T-cell (primary cell): ENCODE measurements at regions of chr12 and their contacts with region 1.

Region 1: DNA sequence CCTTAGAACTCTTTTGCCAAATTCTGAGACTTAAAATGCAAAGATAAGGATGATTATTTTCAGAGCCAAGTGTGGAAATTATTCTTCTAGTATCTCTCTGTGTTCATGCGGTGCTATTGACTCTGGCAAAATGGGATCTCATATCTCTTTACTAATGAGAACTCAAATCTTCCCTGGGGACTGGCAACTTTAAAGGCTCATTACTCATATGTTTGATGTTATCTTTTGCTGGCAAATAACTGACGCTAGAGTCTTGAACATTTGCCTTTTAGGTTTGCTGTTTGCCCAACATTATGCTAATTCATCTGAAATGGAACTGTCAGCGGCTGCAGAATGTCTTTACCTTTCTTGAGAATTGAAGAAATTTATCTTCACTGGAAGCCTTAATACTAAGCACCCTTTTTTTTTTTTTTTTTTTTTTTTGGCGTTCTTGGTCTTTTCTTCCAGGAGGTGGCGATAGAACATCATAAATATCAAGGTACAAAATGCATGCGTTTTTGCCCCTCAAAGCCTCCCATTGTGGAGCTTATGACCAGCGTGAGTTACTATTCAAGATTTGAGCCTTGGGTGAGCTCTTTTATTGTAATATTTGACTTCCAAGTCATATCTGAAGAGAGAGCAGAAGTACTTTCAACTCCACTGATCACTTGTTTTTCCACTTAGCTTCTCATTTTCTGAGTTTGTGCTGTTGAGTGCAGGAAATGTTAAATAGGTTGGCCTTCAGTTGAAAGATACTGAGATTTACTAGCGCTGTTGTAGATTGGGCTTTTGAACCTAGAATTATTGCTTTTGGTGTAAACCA is 86.6 kb downstream of the CAND1 start:
- DNase-seq: peak in 14 of 35 experiments; percentile 0 to 77 (median 8)
- ATAC-seq: peak; percentile 55 to 73 (median 64)
- H3K4me3 ChIP-seq: no peak overlapping the region
- H3K4me3 Mint-ChIP-seq: no peak overlapping the region
- H3K27ac ChIP-seq: no peak overlapping the region
- H3K27ac Mint-ChIP-seq: no peak overlapping the region
- H3K4me1 ChIP-seq: peaks cover 0 to 12% of the 10 kb centered on the region in 2 experiments
- H3K4me1 Mint-ChIP-seq: peaks cover 14 to 24% (median 21%) of the 10 kb centered on the region in 3 donors
- H3K27me3 ChIP-seq: no peaks in the 10 kb centered on the region
- H3K27me3 Mint-ChIP-seq: no peaks in the 10 kb centered on the region

Region 2: DNA sequence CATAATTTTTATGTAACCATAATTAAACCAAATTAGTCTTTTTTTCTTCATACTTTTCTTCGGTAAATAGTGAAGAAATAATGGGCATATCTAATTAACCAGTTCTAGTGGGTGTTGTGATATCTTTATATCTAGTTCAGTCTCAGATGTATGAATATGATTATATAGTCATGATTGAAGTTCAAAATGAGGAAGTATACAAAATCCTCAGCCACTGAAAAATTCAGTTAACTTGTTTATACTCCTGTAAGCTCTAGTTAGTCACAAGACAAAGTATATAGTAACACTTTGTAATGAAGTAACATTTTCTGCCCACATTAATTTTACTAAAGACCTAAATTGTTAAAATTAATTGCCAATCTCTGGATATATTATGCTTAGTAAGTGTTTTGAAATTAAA is 40.1 kb before region 1 on chr12:
- CTCF ChIA-PET with region 1: interaction called, 3 read pairs
- POLR2A ChIA-PET with region 1: interaction called in 1 of 2 experiments, 10 read pairs
- DNase-seq: no peak
- ATAC-seq: no peak
- H3K4me3 ChIP-seq: no peak overlapping the region
- H3K4me3 Mint-ChIP-seq: no peak overlapping the region
- H3K27ac ChIP-seq: no peak overlapping the region
- H3K27ac Mint-ChIP-seq: no peak overlapping the region
- H3K4me1 ChIP-seq: no peaks in the 10 kb centered on the region
- H3K4me1 Mint-ChIP-seq: peaks cover 3 to 10% (median 5%) of the 10 kb centered on the region in 3 donors
- H3K27me3 ChIP-seq: no peaks in the 10 kb centered on the region
- H3K27me3 Mint-ChIP-seq: no peaks in the 10 kb centered on the region

Region 3: GRCh38 chr12:67434671-67435370 is 79.0 kb after region 1 on chr12:
- CTCF ChIA-PET with region 1: interaction called, 4 to 10 read pairs
- POLR2A ChIA-PET with region 1: no interaction called
- DNase-seq: no peak
- ATAC-seq: no peak
- H3K4me3 ChIP-seq: no peak overlapping the region
- H3K4me3 Mint-ChIP-seq: no peak overlapping the region
- H3K27ac ChIP-seq: no peak overlapping the region
- H3K27ac Mint-ChIP-seq: no peak overlapping the region
- H3K4me1 ChIP-seq: no peaks in the 10 kb centered on the region
- H3K4me1 Mint-ChIP-seq: peaks cover 8 to 12% (median 11%) of the 10 kb centered on the region in 3 donors
- H3K27me3 ChIP-seq: no peaks in the 10 kb centered on the region
- H3K27me3 Mint-ChIP-seq: peaks cover 1 to 4% of the 10 kb centered on the region in 2 donors

Region 4: DNA sequence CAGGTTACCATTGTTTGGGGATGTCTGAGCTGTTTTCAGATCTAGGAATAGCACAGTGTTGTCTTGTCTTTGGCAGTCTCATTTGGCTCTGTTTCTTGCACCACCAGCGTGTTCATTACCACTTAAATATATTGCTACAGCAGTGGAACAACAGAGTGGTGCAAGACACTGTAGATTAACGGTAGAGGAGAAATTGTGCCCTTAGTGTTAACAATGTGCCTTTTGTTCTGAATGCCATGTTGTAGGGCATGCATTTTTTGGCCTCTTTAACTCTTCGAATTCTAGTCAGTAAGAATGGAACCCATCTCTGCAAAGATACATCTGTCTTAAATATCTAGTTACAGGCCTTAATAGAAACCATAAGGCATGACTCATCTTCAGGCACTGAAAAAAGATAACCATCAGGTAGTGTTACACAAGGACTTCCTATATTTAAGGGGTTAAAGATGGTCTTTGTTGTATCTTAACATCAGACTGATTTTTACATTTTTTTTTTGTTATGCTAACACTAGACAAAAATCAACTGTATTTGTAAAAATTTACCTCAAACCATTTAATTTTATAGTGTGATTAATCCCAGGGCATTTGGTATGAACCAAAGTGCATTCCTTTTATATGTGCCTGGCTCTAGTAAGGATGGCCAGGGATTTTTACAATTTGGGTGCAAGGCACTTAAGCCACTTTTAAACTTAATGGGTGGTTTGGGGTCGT is 305.7 kb after region 1 on chr12:
- CTCF ChIA-PET with region 1: interaction called, 8 to 13 read pairs
- POLR2A ChIA-PET with region 1: no interaction called
- DNase-seq: no peak
- ATAC-seq: peak in 2 of 4 experiments; percentile 34 to 36
- H3K4me3 ChIP-seq: no peak overlapping the region
- H3K4me3 Mint-ChIP-seq: peak overlapping the region in 2 of 3 donors; percentile 22 to 43
- H3K27ac ChIP-seq: no peak overlapping the region
- H3K27ac Mint-ChIP-seq: peak overlapping the region; percentile 34 to 60
- H3K4me1 ChIP-seq: peaks cover 16 to 26% of the 10 kb centered on the region in 2 experiments
- H3K4me1 Mint-ChIP-seq: peaks cover 91 to 95% (median 92%) of the 10 kb centered on the region in 3 donors
- H3K27me3 ChIP-seq: no peaks in the 10 kb centered on the region
- H3K27me3 Mint-ChIP-seq: no peaks in the 10 kb centered on the region

Region 5: DNA sequence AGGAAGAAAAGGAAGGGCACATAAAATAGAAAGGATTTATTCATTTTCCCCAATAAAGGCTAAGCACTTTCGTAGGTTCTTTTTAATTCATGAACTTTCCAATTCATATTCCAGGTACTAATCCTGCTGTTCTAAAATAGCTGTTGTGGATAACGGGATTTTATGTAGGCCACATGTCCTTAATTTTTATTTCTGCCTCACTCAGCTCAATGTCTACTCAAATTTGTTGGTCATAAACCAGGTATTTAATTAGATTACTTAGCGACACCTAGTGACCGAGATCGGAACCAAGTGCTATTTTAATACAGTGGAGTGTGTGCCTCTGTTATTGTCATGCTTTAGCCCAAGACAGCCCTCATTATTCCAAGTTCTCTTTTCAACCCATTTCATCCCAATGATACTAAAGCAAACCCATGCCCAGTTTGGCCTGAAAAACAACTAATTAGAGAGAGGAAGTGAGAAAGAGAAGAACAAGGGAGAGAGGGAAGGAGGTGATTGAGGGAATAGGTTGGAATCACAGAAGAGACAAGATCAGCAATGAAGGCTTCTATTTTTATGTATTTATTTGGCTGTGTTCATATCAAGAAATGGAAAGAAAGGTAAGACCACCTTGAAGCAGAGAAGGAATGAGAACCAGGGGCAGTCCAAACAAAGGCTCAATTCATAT is 587.6 kb after region 1 on chr12:
- CTCF ChIA-PET with region 1: interaction called, 71 to 257 read pairs
- POLR2A ChIA-PET with region 1: interaction called in 1 of 2 experiments, 5 read pairs
- DNase-seq: peak in 33 of 35 experiments; percentile 15 to 83 (median 50)
- ATAC-seq: peak; percentile 69 to 87 (median 77)
- H3K4me3 ChIP-seq: no peak overlapping the region
- H3K4me3 Mint-ChIP-seq: no peak overlapping the region
- H3K27ac ChIP-seq: no peak overlapping the region
- H3K27ac Mint-ChIP-seq: no peak overlapping the region
- H3K4me1 ChIP-seq: peaks cover 0 to 2% of the 10 kb centered on the region in 2 experiments
- H3K4me1 Mint-ChIP-seq: peaks cover 1 to 6% (median 5%) of the 10 kb centered on the region in 3 donors
- H3K27me3 ChIP-seq: no peaks in the 10 kb centered on the region
- H3K27me3 Mint-ChIP-seq: peaks cover 0 to under 1% of the 10 kb centered on the region in 2 donors

Region 6: DNA sequence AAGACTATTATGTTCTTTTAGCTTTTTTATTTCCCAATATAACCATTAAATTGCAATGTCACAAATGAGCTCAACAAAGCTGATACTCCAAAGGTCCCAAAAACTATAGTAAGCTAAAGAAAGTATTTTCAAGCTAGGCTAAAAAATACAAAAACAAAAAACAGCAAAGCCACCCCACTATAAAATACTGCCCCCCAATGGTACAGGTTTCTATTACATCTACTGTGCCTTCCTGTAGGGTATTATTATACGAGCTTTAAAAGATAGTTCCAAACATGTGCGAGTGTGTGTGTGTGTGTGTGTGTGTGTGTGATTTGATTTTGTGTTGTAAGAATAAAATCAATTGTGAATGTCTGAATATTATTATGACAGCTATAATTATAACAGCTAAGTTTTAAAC is 802.7 kb after region 1 on chr12:
- CTCF ChIA-PET with region 1: interaction called, 9 to 10 read pairs
- POLR2A ChIA-PET with region 1: no interaction called
- DNase-seq: peak in 6 of 35 experiments; percentile 3 to 72 (median 14)
- ATAC-seq: peak in 2 of 4 experiments; percentile 43 to 47
- H3K4me3 ChIP-seq: peak overlapping the region in 1 of 2 donors; percentile 30
- H3K4me3 Mint-ChIP-seq: peak overlapping the region in 1 of 3 donors; percentile 58
- H3K27ac ChIP-seq: no peak overlapping the region
- H3K27ac Mint-ChIP-seq: no peak overlapping the region
- H3K4me1 ChIP-seq: peaks cover 0 to 4% of the 10 kb centered on the region in 2 experiments
- H3K4me1 Mint-ChIP-seq: peaks cover 10 to 40% (median 37%) of the 10 kb centered on the region in 3 donors
- H3K27me3 ChIP-seq: no peaks in the 10 kb centered on the region
- H3K27me3 Mint-ChIP-seq: no peaks in the 10 kb centered on the region

Region 7: GRCh38 chr12:68440068-68440581 is 1084.3 kb after region 1 on chr12:
- CTCF ChIA-PET with region 1: interaction called in 1 of 2 experiments, 10 read pairs
- POLR2A ChIA-PET with region 1: no interaction called
- DNase-seq: no peak
- ATAC-seq: no peak
- H3K4me3 ChIP-seq: no peak overlapping the region
- H3K4me3 Mint-ChIP-seq: no peak overlapping the region
- H3K27ac ChIP-seq: peak overlapping the region; percentile 20
- H3K27ac Mint-ChIP-seq: peak overlapping the region; percentile 28 to 33
- H3K4me1 ChIP-seq: peaks cover 4 to 21% of the 10 kb centered on the region in 2 experiments
- H3K4me1 Mint-ChIP-seq: peaks cover 23 to 46% (median 32%) of the 10 kb centered on the region in 3 donors
- H3K27me3 ChIP-seq: no peaks in the 10 kb centered on the region
- H3K27me3 Mint-ChIP-seq: no peaks in the 10 kb centered on the region